ENCODE measurements at regions of chr2 and their contacts with region 1.

Region 1: GRCh38 chr2:97663965-97664635 is at the start of gene ACTR1B:
- DNase-seq: peak; percentile 81
- H3K4me3 ChIP-seq: peak within 1 kb of the TSS; percentile 70
- CTCF ChIP-seq: peak; percentile 31

Region 2: DNA sequence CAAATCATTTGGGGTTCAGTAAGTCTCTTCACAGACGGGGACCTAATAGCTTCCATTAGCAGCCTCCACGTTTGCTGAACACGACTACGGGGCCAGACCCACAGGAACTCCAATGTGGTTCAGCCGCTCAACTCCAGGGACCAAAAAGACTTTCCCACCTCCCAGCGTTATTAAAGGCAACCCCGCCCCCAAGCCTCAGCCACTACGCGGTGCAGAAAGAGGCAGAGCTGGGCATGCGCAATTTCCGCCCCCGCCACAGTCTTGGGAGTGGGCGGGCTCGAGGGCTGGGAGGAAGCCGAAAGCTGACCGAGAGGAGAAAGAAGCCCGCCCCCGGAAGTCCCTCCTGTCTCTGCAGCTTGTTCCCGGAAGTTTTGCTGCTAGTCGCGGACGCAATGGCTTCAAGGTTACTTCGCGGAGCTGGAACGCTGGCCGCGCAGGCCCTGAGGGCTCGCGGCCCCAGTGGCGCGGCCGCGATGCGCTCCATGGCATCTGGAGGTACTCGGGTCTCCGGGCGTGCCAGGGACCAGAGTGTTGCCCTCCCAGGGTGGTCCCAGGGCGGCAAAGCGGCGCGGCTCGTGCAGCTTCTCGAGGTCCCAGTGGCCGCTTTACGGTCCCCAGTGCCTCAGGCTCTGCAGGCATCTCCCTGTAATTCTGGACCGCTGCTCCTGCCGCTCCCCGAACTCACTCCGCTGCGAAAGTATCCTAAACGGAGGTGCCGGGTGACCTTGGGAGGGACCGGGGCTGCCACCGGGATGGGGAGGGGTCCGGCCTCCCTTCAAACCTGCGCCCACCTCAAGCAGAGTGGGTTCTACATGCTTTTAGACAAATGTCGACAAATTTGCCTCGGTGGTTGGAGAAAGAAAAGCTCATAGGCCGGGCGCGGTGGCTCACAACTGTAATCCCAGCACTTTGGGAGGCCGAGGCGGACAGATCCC is 18.1 kb before region 1 on chr2 and contains the start of gene COX5B:
- CTCF ChIA-PET with region 1: interaction called, 44 read pairs
- POLR2A ChIA-PET with region 1: interaction called, 23 read pairs
- DNase-seq: peak; percentile 72
- H3K4me3 ChIP-seq: peak within 1 kb of the TSS; percentile 97
- CTCF ChIP-seq: no peak